ENCODE measurements at regions of chr6 and their contacts with region 1.

Region 1: GRCh38 chr6:110179401-110180227 is at the start of gene WASF1:
- DNase-seq: peak; percentile 94
- ATAC-seq: peak; percentile 89
- H3K4me3 Mint-ChIP-seq: no peak within 1 kb of the TSS
- H3K27ac Mint-ChIP-seq: peak within 1 kb of the TSS; percentile 7
- H3K4me1 Mint-ChIP-seq: peaks cover 5% of the 10 kb centered on the region
- H3K27me3 Mint-ChIP-seq: peaks cover 10% of the 10 kb centered on the region
- total RNA-seq, gene WASF1: 4.2 to 4.6 TPM

Region 2: GRCh38 chr6:109440331-109441068 is 739.1 kb before region 1 on chr6 and contains the starts of genes PPIL6 and SMPD2:
- CTCF ChIA-PET with region 1: no interaction called
- POLR2A ChIA-PET with region 1: no interaction called
- intact Hi-C with region 1: loop called in 1 of 2 experiments (anchors 1 kb)
- DNase-seq: peak; percentile 86
- ATAC-seq: peak; percentile 85
- H3K4me3 Mint-ChIP-seq: peak within 1 kb of the TSS; percentile 89
- H3K27ac Mint-ChIP-seq: peak within 1 kb of the TSS; percentile 85
- H3K4me1 Mint-ChIP-seq: peaks cover 18% of the 10 kb centered on the region
- H3K27me3 Mint-ChIP-seq: no peaks in the 10 kb centered on the region
- total RNA-seq, gene PPIL6: 0.09 TPM in 1 of 2 experiments, not detected in the other
- total RNA-seq, gene SMPD2: 7.5 to 9.5 TPM

Region 3: GRCh38 chr6:109513571-109514071 is 666.0 kb before region 1 on chr6:
- CTCF ChIA-PET with region 1: no interaction called
- POLR2A ChIA-PET with region 1: no interaction called
- intact Hi-C with region 1: loop called in 1 of 2 experiments (anchors 10 kb)
- DNase-seq: no peak
- ATAC-seq: no peak
- H3K4me3 Mint-ChIP-seq: no peak overlapping the region
- H3K27ac Mint-ChIP-seq: no peak overlapping the region
- H3K4me1 Mint-ChIP-seq: peaks cover 31% of the 10 kb centered on the region
- H3K27me3 Mint-ChIP-seq: no peaks in the 10 kb centered on the region

Region 4: GRCh38 chr6:110233770-110234374 is 54.3 kb after region 1 on chr6:
- CTCF ChIA-PET with region 1: no interaction called
- POLR2A ChIA-PET with region 1: no interaction called
- intact Hi-C with region 1: loop called in 1 of 2 experiments (anchors 2 kb)
- DNase-seq: no peak
- ATAC-seq: peak; percentile 91
- H3K4me3 Mint-ChIP-seq: no peak overlapping the region
- H3K27ac Mint-ChIP-seq: no peak overlapping the region
- H3K4me1 Mint-ChIP-seq: peaks cover 7% of the 10 kb centered on the region
- H3K27me3 Mint-ChIP-seq: no peaks in the 10 kb centered on the region

Region 5: DNA sequence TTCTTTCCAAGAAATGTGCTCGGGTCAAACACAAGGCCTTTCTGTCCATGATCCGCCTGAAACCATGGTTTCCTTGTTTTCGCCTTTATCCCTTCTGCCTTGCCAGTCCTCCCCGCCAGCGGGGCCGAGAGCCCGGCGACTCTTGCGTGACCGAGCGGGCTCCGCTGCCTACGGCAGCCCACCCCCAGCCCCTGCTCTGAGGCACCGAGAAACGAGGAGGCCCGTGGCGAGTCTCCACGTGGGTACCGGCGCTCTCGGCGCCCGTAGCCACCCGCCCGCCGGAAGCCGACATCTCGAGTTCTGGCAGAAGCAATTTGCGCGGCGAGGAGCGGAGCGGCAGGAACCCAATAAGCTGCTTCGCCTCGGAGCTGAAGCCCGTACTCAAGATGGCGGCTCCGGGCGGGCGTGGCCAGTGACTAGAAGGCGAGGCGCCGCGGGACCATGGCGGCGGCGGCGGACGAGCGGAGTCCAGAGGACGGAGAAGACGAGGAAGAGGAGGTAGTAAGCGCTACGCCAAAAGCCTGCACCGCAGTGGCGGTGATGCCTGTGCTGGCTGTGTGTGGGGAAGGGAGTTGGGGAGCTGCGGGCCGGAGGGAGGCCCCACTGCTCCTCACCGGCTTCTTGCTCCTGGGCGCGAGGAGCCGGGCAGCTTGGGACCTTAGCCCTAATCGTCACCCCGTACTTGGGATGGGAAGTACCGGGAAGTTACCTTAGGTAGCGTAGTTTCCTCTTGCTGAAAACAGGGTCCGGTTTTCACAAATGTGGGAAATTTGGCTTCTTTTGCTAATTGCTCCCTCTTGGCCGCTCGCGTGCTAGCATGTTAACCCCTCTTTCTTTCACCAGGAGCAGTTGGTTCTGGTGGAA is 778.9 kb after region 1 on chr6 and contains the start of gene GTF3C6:
- CTCF ChIA-PET with region 1: no interaction called
- POLR2A ChIA-PET with region 1: no interaction called
- intact Hi-C with region 1: loop called in 1 of 2 experiments (anchors 10 kb)
- DNase-seq: peak; percentile 97
- ATAC-seq: peak; percentile 100
- H3K4me3 Mint-ChIP-seq: peak within 1 kb of the TSS; percentile 90
- H3K27ac Mint-ChIP-seq: peak within 1 kb of the TSS; percentile 97
- H3K4me1 Mint-ChIP-seq: peaks cover 14% of the 10 kb centered on the region
- H3K27me3 Mint-ChIP-seq: peaks cover 1% of the 10 kb centered on the region
- total RNA-seq, gene GTF3C6: 93.0 to 106 TPM